B cell (primary cell): ENCODE measurements at regions of chr10 and their contacts with region 1.

Region 1: DNA sequence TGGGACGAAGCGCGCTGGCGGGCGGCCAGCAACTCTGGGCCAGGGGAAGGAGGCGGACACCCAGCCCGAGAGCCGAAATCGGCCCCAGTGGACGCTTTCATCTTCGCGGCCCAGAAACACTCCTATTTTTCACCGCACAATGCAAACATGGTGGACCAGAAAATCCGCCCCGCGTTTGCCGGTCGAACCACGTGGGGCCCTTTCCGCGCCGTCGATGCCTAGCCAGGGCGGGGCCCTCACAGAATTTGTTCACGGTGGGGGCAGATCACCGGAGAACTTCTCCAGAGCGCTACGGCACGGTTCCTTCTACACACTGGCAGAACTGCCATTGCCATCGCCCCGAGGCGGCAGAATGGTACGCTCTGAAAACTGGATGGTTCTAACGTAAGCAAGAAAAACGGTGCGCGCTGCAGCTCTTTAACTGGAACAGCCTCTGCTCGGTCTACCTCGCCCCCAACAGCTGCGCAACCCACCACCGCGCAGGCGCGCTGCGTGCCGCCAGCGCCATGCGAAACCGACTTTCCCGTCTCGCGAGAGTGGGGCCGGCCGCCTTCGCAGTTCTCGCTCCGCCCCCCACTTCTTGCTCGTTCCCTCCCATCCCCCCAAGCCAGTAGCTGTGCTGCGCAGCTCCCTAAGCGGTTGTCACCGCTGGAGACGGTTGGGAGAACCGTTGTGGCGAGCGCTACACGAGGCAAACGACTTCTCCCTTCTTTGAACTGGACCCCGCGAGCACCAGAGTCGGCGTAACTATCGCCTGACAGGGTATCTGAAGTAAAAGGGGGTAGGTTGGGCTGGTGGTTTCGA is at the start of gene HNRNPH3:
- DNase-seq: peak; percentile 100
- ATAC-seq: peak; percentile 84
- H3K4me3 ChIP-seq: peak within 1 kb of the TSS; percentile 77 to 95 (median 90)
- H3K4me3 Mint-ChIP-seq: peak within 1 kb of the TSS; percentile 99
- H3K27ac ChIP-seq: peak within 1 kb of the TSS; percentile 93 to 94
- H3K27ac Mint-ChIP-seq: peak within 1 kb of the TSS; percentile 100
- H3K4me1 ChIP-seq: peaks cover 42 to 51% of the 10 kb centered on the region in 2 donors
- H3K4me1 Mint-ChIP-seq: peaks cover 62% of the 10 kb centered on the region
- H3K27me3 ChIP-seq: no peaks in the 10 kb centered on the region
- H3K27me3 Mint-ChIP-seq: no peaks in the 10 kb centered on the region
- CTCF ChIP-seq: no peak
- total RNA-seq, gene HNRNPH3: 120 and 124 TPM in 2 replicates

Region 2: GRCh38 chr10:67849331-67850011 is 482.2 kb before region 1 on chr10:
- CTCF ChIA-PET with region 1: no interaction called
- POLR2A ChIA-PET with region 1: interaction called, 8 read pairs
- intact Hi-C with region 1: loop called (anchors 1 kb)
- DNase-seq: peak; percentile 93
- ATAC-seq: peak; percentile 99
- H3K4me3 ChIP-seq: peak overlapping the region; percentile 79 to 98 (median 96)
- H3K4me3 Mint-ChIP-seq: peak overlapping the region; percentile 97
- H3K27ac ChIP-seq: peak overlapping the region; percentile 89 to 91
- H3K27ac Mint-ChIP-seq: peak overlapping the region; percentile 97
- H3K4me1 ChIP-seq: peaks cover 5 to 9% of the 10 kb centered on the region in 2 donors
- H3K4me1 Mint-ChIP-seq: peaks cover 8% of the 10 kb centered on the region
- H3K27me3 ChIP-seq: no peaks in the 10 kb centered on the region
- H3K27me3 Mint-ChIP-seq: no peaks in the 10 kb centered on the region
- CTCF ChIP-seq: no peak

Region 3: GRCh38 chr10:68001539-68001938 is 330.1 kb before region 1 on chr10:
- CTCF ChIA-PET with region 1: no interaction called
- POLR2A ChIA-PET with region 1: no interaction called
- intact Hi-C with region 1: no loop called
- DNase-seq: no peak
- ATAC-seq: no peak
- H3K4me3 ChIP-seq: no peak overlapping the region
- H3K4me3 Mint-ChIP-seq: no peak overlapping the region
- H3K27ac ChIP-seq: no peak overlapping the region
- H3K27ac Mint-ChIP-seq: no peak overlapping the region
- H3K4me1 ChIP-seq: no peaks in the 10 kb centered on the region
- H3K4me1 Mint-ChIP-seq: no peaks in the 10 kb centered on the region
- H3K27me3 ChIP-seq: no peaks in the 10 kb centered on the region
- H3K27me3 Mint-ChIP-seq: no peaks in the 10 kb centered on the region
- CTCF ChIP-seq: no peak

Region 4: GRCh38 chr10:68074775-68075549 is 256.7 kb before region 1 on chr10 and contains the start of gene HERC4:
- CTCF ChIA-PET with region 1: no interaction called
- POLR2A ChIA-PET with region 1: interaction called, 9 read pairs
- intact Hi-C with region 1: loop called (anchors 1 kb)
- DNase-seq: peak; percentile 96
- ATAC-seq: peak; percentile 88
- H3K4me3 ChIP-seq: peak within 1 kb of the TSS; percentile 83 to 95 (median 90)
- H3K4me3 Mint-ChIP-seq: peak within 1 kb of the TSS; percentile 95
- H3K27ac ChIP-seq: peak within 1 kb of the TSS; percentile 99 to 100
- H3K27ac Mint-ChIP-seq: peak within 1 kb of the TSS; percentile 98
- H3K4me1 ChIP-seq: peaks cover 13 to 33% of the 10 kb centered on the region in 2 donors
- H3K4me1 Mint-ChIP-seq: peaks cover 38% of the 10 kb centered on the region
- H3K27me3 ChIP-seq: no peaks in the 10 kb centered on the region
- H3K27me3 Mint-ChIP-seq: no peaks in the 10 kb centered on the region
- CTCF ChIP-seq: no peak
- total RNA-seq, gene HERC4: 118 and 126 TPM in 2 replicates

Region 5: GRCh38 chr10:68406815-68407548 is 75.3 kb after region 1 on chr10 and contains the start of gene RUFY2:
- CTCF ChIA-PET with region 1: interaction called, 3 read pairs
- POLR2A ChIA-PET with region 1: interaction called, 10 read pairs
- intact Hi-C with region 1: loop called (anchors 1 kb)
- DNase-seq: peak; percentile 91
- ATAC-seq: peak; percentile 93
- H3K4me3 ChIP-seq: peak within 1 kb of the TSS; percentile 79 to 94 (median 91)
- H3K4me3 Mint-ChIP-seq: peak within 1 kb of the TSS; percentile 92
- H3K27ac ChIP-seq: peak within 1 kb of the TSS; percentile 51 to 83
- H3K27ac Mint-ChIP-seq: peak within 1 kb of the TSS; percentile 89
- H3K4me1 ChIP-seq: peaks cover 6 to 9% of the 10 kb centered on the region in 2 donors
- H3K4me1 Mint-ChIP-seq: peaks cover 22% of the 10 kb centered on the region
- H3K27me3 ChIP-seq: no peaks in the 10 kb centered on the region
- H3K27me3 Mint-ChIP-seq: no peaks in the 10 kb centered on the region
- CTCF ChIP-seq: peak; percentile 73
- total RNA-seq, gene RUFY2: 38.7 and 41.6 TPM in 2 replicates

Region 6: DNA sequence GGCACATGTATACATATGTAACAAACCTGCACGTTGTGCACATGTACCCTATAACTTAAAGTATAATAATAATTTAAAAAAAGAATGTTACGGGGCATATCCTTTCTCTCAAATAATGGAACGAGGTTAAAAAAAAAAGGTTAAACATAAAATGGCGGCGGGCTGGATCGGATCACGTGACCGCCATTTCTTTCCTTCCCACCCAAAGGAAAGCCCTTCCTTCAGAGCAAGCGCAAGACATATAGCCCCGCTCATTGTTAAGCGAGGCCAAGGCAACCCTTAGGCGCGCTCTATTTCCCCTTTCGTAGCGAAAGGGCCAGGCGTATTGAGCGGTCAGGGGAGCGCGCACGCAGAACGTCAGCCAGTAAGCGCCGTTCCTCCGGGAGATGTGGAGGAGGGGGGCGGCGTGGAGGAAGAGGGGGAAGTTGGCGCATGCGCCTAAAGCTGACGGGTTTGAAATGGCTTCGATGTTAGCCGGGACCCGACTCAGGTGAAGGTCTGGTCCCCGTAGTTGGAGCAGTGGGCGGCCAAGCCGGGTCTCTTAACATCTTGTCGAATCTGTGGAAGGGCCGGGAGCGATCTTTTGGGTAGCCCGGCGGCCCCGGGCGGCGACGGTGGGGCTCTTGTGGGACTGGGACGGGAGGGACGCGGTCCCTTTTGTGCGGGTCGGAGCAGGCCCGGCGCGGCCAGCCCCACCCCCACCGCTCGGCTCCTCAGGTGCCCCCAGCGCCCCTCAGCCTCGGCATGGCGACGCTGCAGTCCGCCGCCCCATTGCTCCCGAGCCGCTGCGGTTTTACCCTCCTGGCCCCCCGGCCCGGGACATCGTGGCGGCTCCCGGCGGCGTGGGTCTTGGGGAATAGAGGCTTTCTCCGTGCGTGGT is 389.4 kb after region 1 on chr10 and contains the start of gene CCAR1:
- CTCF ChIA-PET with region 1: no interaction called
- POLR2A ChIA-PET with region 1: interaction called, 10 read pairs
- intact Hi-C with region 1: loop called (anchors 2 kb)
- DNase-seq: peak; percentile 99
- ATAC-seq: peak; percentile 97
- H3K4me3 ChIP-seq: peak within 1 kb of the TSS; percentile 58 to 96 (median 93)
- H3K4me3 Mint-ChIP-seq: peak within 1 kb of the TSS; percentile 96
- H3K27ac ChIP-seq: peak within 1 kb of the TSS; percentile 81 to 95
- H3K27ac Mint-ChIP-seq: peak within 1 kb of the TSS; percentile 97
- H3K4me1 ChIP-seq: peaks cover 10 to 15% of the 10 kb centered on the region in 2 donors
- H3K4me1 Mint-ChIP-seq: peaks cover 17% of the 10 kb centered on the region
- H3K27me3 ChIP-seq: no peaks in the 10 kb centered on the region
- H3K27me3 Mint-ChIP-seq: no peaks in the 10 kb centered on the region
- CTCF ChIP-seq: no peak
- total RNA-seq, gene CCAR1: 98.9 and 101 TPM in 2 replicates